GM12878 (cell line): ENCODE measurements at regions of chr2 and their contacts with region 1.

Region 1: GRCh38 chr2:178404368-178404767 is 46.6 kb downstream of the PRKRA start:
- DNase-seq: peak; percentile 95
- ATAC-seq: peak; percentile 99
- H3K4me3 ChIP-seq: peak overlapping the region; percentile 36; the same call in 1 of the 2 replicates
- H3K27ac ChIP-seq: peak overlapping the region; percentile 64
- H3K4me1 ChIP-seq: peaks cover 24% of the 10 kb centered on the region
- H3K27me3 ChIP-seq: no peaks in the 10 kb centered on the region
- CTCF ChIP-seq: no peak
- EP300 ChIP-seq: peak; percentile 99 to 100
- POLR2A ChIP-seq: peak; percentile 67
- RAD21 ChIP-seq: no peak

Region 2: DNA sequence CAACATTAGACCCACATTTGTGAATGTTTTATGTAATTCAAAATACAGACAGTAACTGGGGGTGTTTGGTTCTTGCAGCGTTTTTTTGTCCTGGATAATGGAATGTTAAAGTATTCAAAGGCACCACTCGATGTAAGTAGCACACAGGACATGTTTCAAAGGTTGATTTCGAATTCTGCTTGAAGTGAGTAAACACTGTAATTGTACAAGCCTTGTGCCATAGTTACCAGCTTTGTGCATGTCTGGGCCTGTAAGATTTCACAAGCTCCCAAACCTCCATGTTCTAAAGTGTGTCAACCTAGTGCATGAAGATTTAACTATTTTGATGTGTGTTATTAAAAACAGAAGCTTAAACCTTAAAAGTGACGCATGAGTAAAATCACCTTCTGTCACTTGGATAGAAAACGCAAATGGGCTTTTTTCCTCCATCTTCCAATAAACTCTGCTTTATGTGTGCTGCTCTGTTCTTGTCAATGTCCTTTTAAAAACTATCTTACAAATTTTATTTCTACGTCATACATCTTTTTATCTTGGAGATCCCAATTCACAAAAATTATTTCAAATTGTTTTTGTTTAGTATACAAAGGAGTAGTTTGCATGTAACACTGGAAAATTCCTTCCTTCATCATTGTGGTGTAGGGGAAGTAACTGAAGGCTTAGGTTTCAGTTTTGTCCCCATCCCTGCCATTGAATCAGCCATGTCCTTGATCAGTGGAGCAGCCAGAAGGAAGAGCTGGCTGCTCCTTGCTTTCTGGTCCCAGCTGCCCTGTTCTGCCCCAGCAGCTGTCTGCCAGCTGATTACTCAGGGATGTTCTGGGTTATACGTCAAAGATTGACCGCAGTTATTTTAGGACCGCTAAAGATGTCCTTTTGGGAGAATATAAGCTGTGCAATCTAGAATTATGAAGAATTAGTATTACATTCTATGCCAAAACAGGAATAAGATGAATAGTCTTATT is 72.6 kb before region 1 on chr2:
- CTCF ChIA-PET with region 1: no interaction called
- POLR2A ChIA-PET with region 1: no interaction called
- RAD21 ChIA-PET with region 1: no interaction called
- SMC1A ChIA-PET with region 1: no interaction called
- in situ Hi-C with region 1: no loop called
- intact Hi-C with region 1: no loop called
- DNase-seq: no peak
- ATAC-seq: no peak
- H3K4me3 ChIP-seq: no peak overlapping the region
- H3K27ac ChIP-seq: no peak overlapping the region
- H3K4me1 ChIP-seq: no peaks in the 10 kb centered on the region
- H3K27me3 ChIP-seq: peaks cover 0 to 3% of the 10 kb centered on the region in 2 experiments; a peak in 1 of 4 replicates
- CTCF ChIP-seq: no peak
- EP300 ChIP-seq: no peak
- POLR2A ChIP-seq: no peak
- RAD21 ChIP-seq: no peak

Region 3: GRCh38 chr2:178450774-178451525 is 46.6 kb after region 1 on chr2 and contains the starts of genes PJVK and PRKRA:
- CTCF ChIA-PET with region 1: interaction called, 4 read pairs
- POLR2A ChIA-PET with region 1: interaction called, 5 read pairs
- RAD21 ChIA-PET with region 1: interaction called, 17 read pairs
- SMC1A ChIA-PET with region 1: interaction called, 18 read pairs
- in situ Hi-C with region 1: no loop called
- intact Hi-C with region 1: no loop called
- DNase-seq: peak; percentile 81
- ATAC-seq: peak; percentile 91
- H3K4me3 ChIP-seq: peak within 1 kb of the TSS; percentile 94
- H3K27ac ChIP-seq: peak within 1 kb of the TSS; percentile 94
- H3K4me1 ChIP-seq: peaks cover 9% of the 10 kb centered on the region
- H3K27me3 ChIP-seq: no peaks in the 10 kb centered on the region
- CTCF ChIP-seq: no peak
- EP300 ChIP-seq: 0 out of 4 replicates have a peak, but pooled peaks of 1 of the 2 experiments have one; percentile 2
- POLR2A ChIP-seq: peak; percentile 95
- RAD21 ChIP-seq: no peak
- polyA plus RNA-seq, gene PJVK: 2.1 to 3.0 TPM
- polyA plus RNA-seq, gene PRKRA: 19.1 to 25.1 TPM

Region 4: DNA sequence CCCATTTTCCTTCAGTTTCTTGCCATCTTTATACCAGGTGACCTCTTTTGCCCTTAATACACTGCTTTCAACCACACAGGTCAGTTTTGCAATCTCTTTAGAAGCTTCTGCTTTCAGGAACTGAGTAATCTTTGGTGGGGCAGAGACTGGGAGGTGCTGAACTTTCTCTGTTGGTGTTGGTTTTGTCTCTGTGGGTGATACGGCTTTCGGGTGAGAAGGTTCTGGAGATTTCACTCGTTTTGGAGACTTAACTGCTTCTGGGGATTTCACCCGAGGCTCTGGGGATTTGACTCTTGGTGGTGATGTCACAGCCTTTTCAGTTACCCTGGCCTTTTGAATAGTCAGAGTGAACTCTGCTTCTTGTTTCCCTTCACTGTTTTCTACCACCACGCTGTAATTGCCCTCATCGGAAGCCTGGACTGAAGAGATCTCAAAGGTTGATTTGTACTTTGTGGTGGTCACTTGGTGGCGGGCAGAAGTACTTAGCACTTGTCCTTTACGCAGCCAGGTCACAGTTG is 126.3 kb after region 1 on chr2:
- CTCF ChIA-PET with region 1: no interaction called
- POLR2A ChIA-PET with region 1: no interaction called
- RAD21 ChIA-PET with region 1: interaction called, 7 read pairs
- SMC1A ChIA-PET with region 1: interaction called, 5 read pairs
- in situ Hi-C with region 1: no loop called
- intact Hi-C with region 1: loop called (anchors 5 kb)
- DNase-seq: peak; percentile 96
- ATAC-seq: peak; percentile 91
- H3K4me3 ChIP-seq: peak overlapping the region; percentile 54
- H3K27ac ChIP-seq: peak overlapping the region; percentile 84
- H3K4me1 ChIP-seq: peaks cover 33% of the 10 kb centered on the region
- H3K27me3 ChIP-seq: no peaks in the 10 kb centered on the region
- CTCF ChIP-seq: no peak
- EP300 ChIP-seq: peak; percentile 86 to 89; a peak in 3 of 4 replicates
- POLR2A ChIP-seq: peak; percentile 43; the same call in 1 of the 2 replicates
- RAD21 ChIP-seq: peak; percentile 25; the same call in 1 of the 2 replicates